ENCODE measurements at regions of chr5 and their contacts with region 1.

Region 1: GRCh38 chr5:79962575-79963222 is 28.4 kb downstream of the MTX3 start:
- DNase-seq: peak; percentile 85
- H3K4me3 Mint-ChIP-seq: peak overlapping the region; percentile 45
- H3K27ac Mint-ChIP-seq: peak overlapping the region; percentile 92
- H3K4me1 Mint-ChIP-seq: peaks cover 34% of the 10 kb centered on the region
- H3K27me3 Mint-ChIP-seq: peaks cover 22% of the 10 kb centered on the region

Region 2: GRCh38 chr5:79736528-79737514 is 225.9 kb before region 1 on chr5:
- CTCF ChIA-PET with region 1: no interaction called
- POLR2A ChIA-PET with region 1: no interaction called
- intact Hi-C with region 1: loop called (anchors 1 kb)
- DNase-seq: peak; percentile 21
- H3K4me3 Mint-ChIP-seq: peak overlapping the region; percentile 57
- H3K27ac Mint-ChIP-seq: peak overlapping the region; percentile 62
- H3K4me1 Mint-ChIP-seq: peaks cover 55% of the 10 kb centered on the region
- H3K27me3 Mint-ChIP-seq: peaks cover 34% of the 10 kb centered on the region

Region 3: GRCh38 chr5:79924936-79925893 is 37.5 kb before region 1 on chr5:
- CTCF ChIA-PET with region 1: no interaction called
- POLR2A ChIA-PET with region 1: no interaction called
- intact Hi-C with region 1: loop called (anchors 5 kb)
- DNase-seq: peak; percentile 34
- H3K4me3 Mint-ChIP-seq: no peak overlapping the region
- H3K27ac Mint-ChIP-seq: no peak overlapping the region
- H3K4me1 Mint-ChIP-seq: no peaks in the 10 kb centered on the region
- H3K27me3 Mint-ChIP-seq: peaks cover 4% of the 10 kb centered on the region

Region 4: GRCh38 chr5:79982136-79982535 is 19.4 kb after region 1 on chr5:
- CTCF ChIA-PET with region 1: no interaction called
- POLR2A ChIA-PET with region 1: interaction called, 6 read pairs
- intact Hi-C with region 1: loop called (anchors 1 kb)
- DNase-seq: no peak
- H3K4me3 Mint-ChIP-seq: no peak overlapping the region
- H3K27ac Mint-ChIP-seq: peak overlapping the region; percentile 2
- H3K4me1 Mint-ChIP-seq: peaks cover 44% of the 10 kb centered on the region
- H3K27me3 Mint-ChIP-seq: no peaks in the 10 kb centered on the region

Region 5: GRCh38 chr5:80034962-80035821 is 72.5 kb after region 1 on chr5 and contains the start of gene THBS4:
- CTCF ChIA-PET with region 1: no interaction called
- POLR2A ChIA-PET with region 1: interaction called, 12 read pairs
- intact Hi-C with region 1: loop called (anchors 1 kb)
- DNase-seq: no peak
- H3K4me3 Mint-ChIP-seq: peak within 1 kb of the TSS; percentile 38
- H3K27ac Mint-ChIP-seq: no peak within 1 kb of the TSS
- H3K4me1 Mint-ChIP-seq: peaks cover 37% of the 10 kb centered on the region
- H3K27me3 Mint-ChIP-seq: peaks cover 45% of the 10 kb centered on the region
- total RNA-seq, gene THBS4: 1.8 to 2.2 TPM

Region 6: DNA sequence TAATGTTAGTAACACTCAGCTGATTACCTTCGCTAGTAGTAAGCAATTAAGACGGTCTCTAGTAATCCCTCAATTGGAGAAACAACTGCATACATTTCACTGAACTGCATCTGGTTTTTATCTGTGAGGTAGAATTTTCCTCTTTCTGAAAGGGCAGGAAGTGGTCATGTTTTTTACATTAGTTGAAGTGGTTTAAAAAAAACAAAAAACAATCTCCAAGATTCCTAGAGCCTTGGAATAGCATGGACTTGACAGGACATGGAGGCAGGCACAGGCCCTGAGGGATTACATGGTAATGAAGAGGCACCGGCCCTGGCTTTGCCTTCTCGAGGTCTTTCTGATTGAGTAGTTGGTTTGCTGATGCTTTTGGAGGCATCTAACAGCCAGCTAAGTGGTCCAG is 98.3 kb after region 1 on chr5:
- CTCF ChIA-PET with region 1: interaction called, 5 read pairs
- POLR2A ChIA-PET with region 1: no interaction called
- intact Hi-C with region 1: loop called (anchors 1 kb)
- DNase-seq: no peak
- H3K4me3 Mint-ChIP-seq: no peak overlapping the region
- H3K27ac Mint-ChIP-seq: no peak overlapping the region
- H3K4me1 Mint-ChIP-seq: peaks cover 11% of the 10 kb centered on the region
- H3K27me3 Mint-ChIP-seq: no peaks in the 10 kb centered on the region

Measured in activated CD4-positive, alpha-beta memory T cell treated with anti-CD3 and anti-CD28 coated beads for 36 hours (primary cell).